Panc1 (cell line): ENCODE measurements at regions of chr12 and their contacts with region 1.

Region 1: DNA sequence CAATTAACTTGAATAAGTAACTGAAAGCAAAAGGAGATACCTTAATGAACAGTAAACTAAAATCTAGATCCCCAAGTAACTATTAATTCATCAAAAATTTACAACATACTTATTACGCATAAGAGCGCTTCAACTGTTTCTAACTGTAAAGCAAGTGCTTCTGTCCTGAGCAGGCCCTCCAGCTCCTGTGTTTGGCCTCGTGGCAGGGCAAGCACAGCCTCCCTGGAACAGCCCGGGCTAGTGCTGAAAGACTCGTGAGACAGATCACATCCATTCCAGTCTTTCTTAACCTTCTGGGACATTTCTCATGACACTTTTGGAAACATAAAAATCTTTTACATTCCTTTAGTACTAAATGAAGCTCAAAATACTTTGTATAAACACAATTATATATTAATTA is 178.8 kb upstream of the ABCD2 start:
- DNase-seq: no peak
- ATAC-seq: no peak
- H3K4me3 ChIP-seq: no peak overlapping the region
- H3K27ac ChIP-seq: no peak overlapping the region
- H3K4me1 ChIP-seq: no peaks in the 10 kb centered on the region
- H3K27me3 ChIP-seq: no peaks in the 10 kb centered on the region
- CTCF ChIP-seq: no peak

Region 2: DNA sequence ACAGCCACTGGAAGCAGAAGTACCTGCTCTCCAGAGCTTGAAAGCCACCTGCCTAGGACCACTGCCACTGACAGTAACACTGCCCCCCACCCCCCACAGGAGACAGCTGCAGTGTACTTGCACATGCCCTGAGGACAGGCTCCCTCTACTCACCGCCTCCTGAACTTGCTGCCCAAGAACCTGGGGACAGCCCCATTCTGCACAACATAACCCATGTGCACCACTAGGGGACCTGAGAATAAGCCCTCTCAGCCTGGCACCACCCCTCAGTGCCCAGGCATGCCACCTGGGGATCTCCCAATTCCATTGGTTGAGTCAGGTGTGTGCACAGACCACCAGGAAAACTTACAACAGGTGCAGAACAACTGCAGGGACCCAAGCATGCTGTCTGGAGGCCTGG is 288.4 kb before region 1 on chr12:
- CTCF ChIA-PET with region 1: no interaction called
- POLR2A ChIA-PET with region 1: interaction called, 11 read pairs
- in situ Hi-C with region 1: no loop called
- intact Hi-C with region 1: no loop called
- DNase-seq: no peak
- ATAC-seq: no peak; the same call in 1 of the 2 replicates
- H3K4me3 ChIP-seq: no peak overlapping the region
- H3K27ac ChIP-seq: no peak overlapping the region
- H3K4me1 ChIP-seq: no peaks in the 10 kb centered on the region
- H3K27me3 ChIP-seq: no peaks in the 10 kb centered on the region
- CTCF ChIP-seq: no peak